ENCODE measurements at regions of chr13 and their contacts with region 1.

Region 1: GRCh38 chr13:35953537-35954206 is 177.5 kb downstream of the DCLK1 start:
- DNase-seq: peak; percentile 70
- H3K4me3 ChIP-seq: no peak overlapping the region
- H3K27ac ChIP-seq: no peak overlapping the region
- H3K4me1 ChIP-seq: no peaks in the 10 kb centered on the region
- H3K27me3 ChIP-seq: no peaks in the 10 kb centered on the region
- CTCF ChIP-seq: peak in 3 of 4 experiments; percentile 38 to 62 (median 48)
- POLR2A ChIP-seq: no peak

Region 2: DNA sequence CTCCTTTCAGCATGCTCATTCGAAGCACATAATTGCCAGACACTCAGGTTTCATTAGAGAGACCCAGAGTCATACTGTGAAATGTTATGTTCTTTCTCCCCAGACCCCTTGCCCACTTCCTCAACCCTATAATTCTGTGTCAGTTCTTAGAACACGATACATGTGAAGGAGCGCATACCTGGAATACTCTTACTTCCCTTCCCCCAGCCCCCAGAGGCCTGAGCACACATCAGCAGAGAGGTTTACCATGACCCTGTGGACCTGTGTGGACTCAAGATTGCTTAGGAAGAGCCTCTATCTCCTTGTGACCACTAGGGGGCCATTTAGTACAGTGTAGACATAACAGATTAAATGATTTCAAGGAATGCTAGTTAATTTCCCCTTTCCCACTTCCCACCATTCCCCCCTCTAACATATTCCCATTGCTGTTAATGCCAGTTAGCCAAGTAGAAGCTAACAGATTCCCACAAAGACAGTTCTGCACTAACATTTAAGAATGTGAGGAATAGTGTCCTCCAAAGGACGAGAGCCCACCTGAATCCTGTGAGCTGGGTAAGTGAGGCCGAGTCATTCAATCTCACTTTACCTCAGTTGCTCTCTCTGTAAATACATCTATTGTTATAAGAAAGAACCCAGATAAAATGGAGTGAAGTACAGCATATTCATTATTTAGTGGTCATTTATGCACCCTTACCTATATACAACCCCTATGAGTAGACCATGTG is 323.0 kb before region 1 on chr13:
- intact Hi-C with region 1: loop called (anchors 10 kb)
- DNase-seq: peak; percentile 16
- H3K4me3 ChIP-seq: no peak overlapping the region
- H3K27ac ChIP-seq: no peak overlapping the region
- H3K4me1 ChIP-seq: no peaks in the 10 kb centered on the region
- H3K27me3 ChIP-seq: no peaks in the 10 kb centered on the region
- CTCF ChIP-seq: peak in 3 of 4 experiments; percentile 37 to 73 (median 47)
- POLR2A ChIP-seq: no peak

Region 3: DNA sequence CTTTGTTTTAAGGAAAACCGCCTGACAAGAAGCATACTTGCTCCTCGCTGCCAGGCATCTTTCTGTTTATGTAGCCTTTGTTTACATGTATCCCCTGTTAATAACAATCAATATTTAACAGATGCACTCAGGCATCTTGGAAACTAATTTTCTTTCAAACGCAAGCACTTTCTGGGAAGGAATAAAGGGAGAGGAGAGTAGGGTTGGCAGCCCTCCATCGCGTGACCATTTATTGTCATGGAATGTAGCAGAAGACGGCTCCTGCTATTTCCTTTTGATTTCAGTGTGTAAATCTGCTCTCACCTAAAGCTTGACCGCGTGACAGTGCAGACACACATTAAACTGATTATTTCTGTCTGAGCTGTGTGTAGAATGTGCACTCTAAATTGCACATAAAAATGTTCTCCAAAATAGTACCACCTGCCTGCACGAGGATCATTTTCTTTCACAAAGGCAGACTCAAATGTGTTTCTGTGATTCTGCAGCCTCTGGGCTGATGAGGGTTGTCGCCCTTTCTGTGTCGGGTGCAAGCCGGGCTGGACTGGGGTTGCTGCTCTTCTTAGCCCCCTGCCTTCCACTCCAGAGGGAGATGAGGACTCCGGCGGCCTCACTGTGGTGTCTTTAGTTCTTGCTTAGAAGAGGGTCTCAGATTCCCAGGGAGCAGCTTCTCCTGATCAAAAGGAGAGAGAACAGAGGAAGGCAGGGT is 253.7 kb before region 1 on chr13:
- intact Hi-C with region 1: loop called (anchors 5 kb)
- DNase-seq: peak; percentile 19
- H3K4me3 ChIP-seq: no peak overlapping the region
- H3K27ac ChIP-seq: peak overlapping the region; percentile 8 to 42
- H3K4me1 ChIP-seq: no peaks in the 10 kb centered on the region
- H3K27me3 ChIP-seq: no peaks in the 10 kb centered on the region
- CTCF ChIP-seq: no peak
- POLR2A ChIP-seq: no peak

Region 4: DNA sequence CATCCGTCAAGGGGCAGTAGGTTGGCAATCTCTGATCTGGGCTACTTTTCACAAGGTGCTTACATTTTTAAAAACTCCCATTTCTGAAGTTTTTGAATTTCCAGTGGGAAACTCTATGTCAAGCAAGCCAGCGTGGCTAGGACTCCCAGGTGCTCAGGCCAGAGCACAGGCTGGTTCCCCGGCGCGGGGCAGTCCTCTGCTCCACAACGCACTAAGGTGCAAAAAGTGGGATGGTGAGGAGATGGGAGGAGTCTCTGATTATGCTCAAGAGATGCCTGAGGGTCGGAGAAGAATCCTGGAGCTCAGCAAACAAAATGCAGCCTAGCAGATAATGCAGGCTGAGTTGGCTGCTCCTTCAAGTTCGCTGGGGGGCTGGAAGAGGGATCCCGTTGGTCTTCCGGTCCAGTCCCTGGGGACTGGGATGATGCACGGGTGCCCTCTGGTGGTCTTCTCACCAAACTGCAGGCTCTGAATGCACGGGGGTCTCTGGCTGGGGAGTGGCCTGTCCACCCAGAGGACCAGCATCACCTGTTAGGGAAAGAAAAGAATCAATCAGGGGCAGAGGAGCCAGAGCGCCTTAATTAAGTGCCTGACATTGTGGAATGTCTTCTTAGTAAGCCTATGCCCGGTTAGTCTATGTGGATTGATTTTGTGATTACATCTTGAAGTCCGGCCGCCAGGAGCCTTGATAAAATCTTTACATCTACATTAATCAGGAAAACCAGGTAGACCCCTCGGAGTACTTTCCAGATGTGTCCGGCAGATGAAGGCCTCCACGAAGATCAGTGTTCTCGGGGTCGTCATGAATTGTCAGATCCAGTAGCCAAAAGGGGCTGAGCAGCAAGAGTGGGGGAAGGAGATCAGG is 232.8 kb before region 1 on chr13:
- intact Hi-C with region 1: loop called (anchors 5 kb)
- DNase-seq: peak; percentile 19
- H3K4me3 ChIP-seq: no peak overlapping the region
- H3K27ac ChIP-seq: no peak overlapping the region
- H3K4me1 ChIP-seq: no peaks in the 10 kb centered on the region
- H3K27me3 ChIP-seq: no peaks in the 10 kb centered on the region
- CTCF ChIP-seq: peak; percentile 71 to 87 (median 82)
- POLR2A ChIP-seq: no peak

Region 5: GRCh38 chr13:35818633-35819067 is 135.0 kb before region 1 on chr13:
- intact Hi-C with region 1: loop called (anchors 10 kb)
- DNase-seq: no peak
- H3K4me3 ChIP-seq: no peak overlapping the region
- H3K27ac ChIP-seq: no peak overlapping the region
- H3K4me1 ChIP-seq: no peaks in the 10 kb centered on the region
- H3K27me3 ChIP-seq: no peaks in the 10 kb centered on the region
- CTCF ChIP-seq: peak; percentile 54 to 78 (median 67)
- POLR2A ChIP-seq: no peak

Region 6: GRCh38 chr13:35855531-35856019 is 98.1 kb before region 1 on chr13:
- intact Hi-C with region 1: loop called (anchors 5 kb)
- DNase-seq: no peak
- H3K4me3 ChIP-seq: no peak overlapping the region
- H3K27ac ChIP-seq: no peak overlapping the region
- H3K4me1 ChIP-seq: no peaks in the 10 kb centered on the region
- H3K27me3 ChIP-seq: no peaks in the 10 kb centered on the region
- CTCF ChIP-seq: no peak
- POLR2A ChIP-seq: no peak